ENCODE measurements at regions of chr12 and their contacts with region 1.

Region 1: GRCh38 chr12:14629832-14630710 is 62.4 kb upstream of the PLBD1 start:
- DNase-seq: peak; percentile 44
- ATAC-seq: peak; percentile 100
- H3K4me3 ChIP-seq: no peak overlapping the region
- H3K27ac ChIP-seq: no peak overlapping the region
- H3K4me1 ChIP-seq: no peaks in the 10 kb centered on the region
- H3K27me3 ChIP-seq: no peaks in the 10 kb centered on the region
- CTCF ChIP-seq: peak; percentile 91
- EP300 ChIP-seq: no peak
- POLR2A ChIP-seq: no peak
- RAD21 ChIP-seq: peak; percentile 72

Region 2: DNA sequence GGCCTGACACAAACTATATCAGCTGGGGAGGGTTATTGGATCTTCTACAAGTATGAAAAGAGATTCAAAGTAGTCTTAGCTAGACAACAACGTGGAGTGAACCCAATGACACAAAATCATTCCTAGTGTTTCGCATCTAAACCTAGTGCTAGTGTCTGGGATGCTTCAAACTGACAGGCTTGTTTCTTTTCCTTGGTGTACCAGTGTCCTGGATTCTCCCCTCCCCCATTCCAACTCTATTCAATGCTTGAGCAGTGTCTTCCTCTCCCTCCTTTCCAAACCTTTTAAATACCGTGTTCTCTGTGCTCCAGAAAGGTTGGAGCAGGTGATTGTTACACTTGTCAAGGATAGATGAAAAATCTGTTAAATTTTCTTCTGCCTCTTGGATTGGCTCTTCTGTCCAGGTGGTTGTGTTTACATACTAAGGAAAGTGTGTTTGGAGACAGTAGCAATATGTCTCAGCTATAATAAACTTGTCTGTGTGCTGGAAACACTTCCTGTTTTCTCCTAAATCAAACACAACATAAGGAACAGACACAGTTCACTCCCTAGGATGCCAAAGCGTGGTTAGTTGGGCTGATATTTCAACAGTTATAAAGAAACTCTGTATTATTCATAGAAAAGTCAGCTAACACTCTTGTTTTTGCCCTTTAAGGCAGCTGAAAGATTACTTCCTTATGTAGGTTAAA is 80.7 kb after region 1 on chr12:
- CTCF ChIA-PET with region 1: interaction called, 3 read pairs
- POLR2A ChIA-PET with region 1: no interaction called
- in situ Hi-C with region 1: loop called (anchors 5 kb)
- intact Hi-C with region 1: no loop called
- DNase-seq: no peak
- ATAC-seq: no peak
- H3K4me3 ChIP-seq: no peak overlapping the region
- H3K27ac ChIP-seq: no peak overlapping the region
- H3K4me1 ChIP-seq: no peaks in the 10 kb centered on the region
- H3K27me3 ChIP-seq: no peaks in the 10 kb centered on the region
- CTCF ChIP-seq: no peak
- EP300 ChIP-seq: no peak
- POLR2A ChIP-seq: no peak
- RAD21 ChIP-seq: no peak

Region 3: DNA sequence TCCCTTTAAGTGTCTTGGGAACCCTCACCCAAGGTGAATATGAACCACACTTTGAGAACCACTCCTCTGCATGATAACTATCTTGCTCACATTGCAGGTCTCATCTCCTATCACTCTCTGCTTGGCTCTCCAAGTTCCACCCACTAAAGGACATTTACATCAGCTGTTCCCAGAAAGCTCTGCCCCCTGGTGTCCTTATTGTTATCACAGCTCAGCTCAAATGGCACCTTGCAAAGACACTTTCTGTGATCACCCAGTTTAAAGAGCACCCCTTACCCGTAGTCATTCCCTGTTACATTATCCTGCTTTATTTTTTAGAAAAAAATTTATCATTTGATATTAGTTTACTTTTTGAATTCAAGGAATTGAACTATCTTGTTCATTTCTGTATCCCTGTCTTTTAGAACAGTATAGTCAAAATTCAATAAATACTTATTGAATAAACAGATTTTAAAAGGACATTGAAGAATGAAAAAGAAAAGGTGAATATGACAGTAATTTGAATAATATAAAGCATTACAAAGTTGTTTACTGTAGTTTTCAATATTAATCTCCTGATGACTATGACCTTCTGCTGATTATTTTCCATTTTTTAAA is 86.9 kb after region 1 on chr12:
- CTCF ChIA-PET with region 1: interaction called, 19 read pairs
- POLR2A ChIA-PET with region 1: no interaction called
- in situ Hi-C with region 1: loop called (anchors 5 kb)
- intact Hi-C with region 1: loop called (anchors 1 kb)
- DNase-seq: peak; percentile 52
- ATAC-seq: peak; percentile 88
- H3K4me3 ChIP-seq: no peak overlapping the region
- H3K27ac ChIP-seq: no peak overlapping the region
- H3K4me1 ChIP-seq: no peaks in the 10 kb centered on the region
- H3K27me3 ChIP-seq: no peaks in the 10 kb centered on the region
- CTCF ChIP-seq: peak; percentile 75
- EP300 ChIP-seq: no peak
- POLR2A ChIP-seq: no peak
- RAD21 ChIP-seq: no peak

Region 4: GRCh38 chr12:14995583-14996425 is 365.7 kb after region 1 on chr12:
- CTCF ChIA-PET with region 1: no interaction called
- POLR2A ChIA-PET with region 1: no interaction called
- in situ Hi-C with region 1: no loop called
- intact Hi-C with region 1: loop called (anchors 10 kb)
- DNase-seq: peak; percentile 52
- ATAC-seq: no peak
- H3K4me3 ChIP-seq: no peak overlapping the region
- H3K27ac ChIP-seq: no peak overlapping the region
- H3K4me1 ChIP-seq: no peaks in the 10 kb centered on the region
- H3K27me3 ChIP-seq: peaks cover 0 to 2% of the 10 kb centered on the region in 2 experiments; a peak in 1 of 5 replicates
- CTCF ChIP-seq: peak; percentile 63
- EP300 ChIP-seq: no peak
- POLR2A ChIP-seq: no peak
- RAD21 ChIP-seq: no peak

Measured in HepG2 (cell line).